H1 (cell line): ENCODE measurements at regions of chr3 and their contacts with region 1.

Region 1: DNA sequence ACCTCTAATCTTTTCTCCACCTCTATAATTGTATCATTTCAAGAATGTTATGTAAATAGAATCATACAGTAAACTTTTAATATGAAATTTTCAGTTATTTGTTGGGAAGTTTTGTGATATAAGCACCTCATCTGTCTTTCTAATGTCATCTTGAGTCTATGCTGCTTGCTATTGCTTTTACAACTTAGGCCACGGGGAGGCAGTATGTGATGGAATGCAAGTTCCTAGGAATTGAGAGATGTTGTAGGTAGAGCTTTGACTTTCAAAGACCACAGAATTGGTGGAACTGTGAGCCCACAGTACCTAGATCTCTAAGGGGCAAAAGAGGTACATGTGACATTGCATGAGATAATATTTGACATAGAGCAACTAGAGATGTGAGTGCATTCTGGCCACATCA is 328.3 kb downstream of the MFSD1 start:
- DNase-seq: peak; percentile 5 to 69
- H3K4me3 ChIP-seq: no peak overlapping the region
- H3K27ac ChIP-seq: no peak overlapping the region
- H3K4me1 ChIP-seq: no peaks in the 10 kb centered on the region
- H3K27me3 ChIP-seq: no peaks in the 10 kb centered on the region
- CTCF ChIP-seq: peak in 2 of 3 experiments; percentile 66 to 78; a peak in 3 of 4 replicates
- EP300 ChIP-seq: no peak
- POLR2A ChIP-seq: no peak
- RAD21 ChIP-seq: peak; percentile 67 to 75

Region 2: DNA sequence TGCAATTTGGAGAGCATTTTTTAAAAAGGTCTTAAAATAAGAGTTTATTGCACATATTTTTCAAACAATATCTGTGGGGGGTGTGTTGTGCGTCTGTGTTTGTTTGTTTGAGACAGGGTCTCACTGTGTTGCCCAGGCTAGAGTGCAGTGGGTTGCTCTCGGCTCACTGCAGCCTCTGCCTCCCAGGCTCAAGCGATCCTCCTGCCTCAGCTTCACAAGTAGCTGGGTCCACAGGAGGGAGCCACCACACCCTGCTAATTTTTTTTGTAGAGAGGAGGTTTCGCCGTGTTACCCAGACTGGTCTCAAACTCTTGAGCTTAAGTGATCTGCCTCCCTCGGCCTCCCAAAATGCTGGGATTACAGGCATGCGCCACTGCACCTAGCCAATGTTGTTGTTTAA is 556.4 kb before region 1 on chr3:
- CTCF ChIA-PET with region 1: no interaction called
- POLR2A ChIA-PET with region 1: no interaction called
- DNase-seq: no peak
- H3K4me3 ChIP-seq: no peak overlapping the region
- H3K27ac ChIP-seq: no peak overlapping the region
- H3K4me1 ChIP-seq: peaks cover 0 to 15% (median 3%) of the 10 kb centered on the region in 4 experiments; a peak in 2 of 7 replicates
- H3K27me3 ChIP-seq: peaks cover 0 to 13% (median 10%) of the 10 kb centered on the region in 4 experiments; a peak in 5 of 7 replicates
- CTCF ChIP-seq: peak in 2 of 3 experiments; percentile 11 to 29; a peak in 2 of 4 replicates
- EP300 ChIP-seq: no peak
- POLR2A ChIP-seq: no peak
- RAD21 ChIP-seq: peak; percentile 36 to 42; a peak in 3 of 4 replicates

Region 3: GRCh38 chr3:158912188-158912587 is 217.9 kb before region 1 on chr3:
- CTCF ChIA-PET with region 1: interaction called, 22 read pairs
- POLR2A ChIA-PET with region 1: no interaction called
- DNase-seq: no peak
- H3K4me3 ChIP-seq: no peak overlapping the region
- H3K27ac ChIP-seq: no peak overlapping the region
- H3K4me1 ChIP-seq: no peaks in the 10 kb centered on the region
- H3K27me3 ChIP-seq: no peaks in the 10 kb centered on the region
- CTCF ChIP-seq: peak in 2 of 3 experiments; percentile 45 to 55; a peak in 2 of 4 replicates
- EP300 ChIP-seq: no peak
- POLR2A ChIP-seq: no peak
- RAD21 ChIP-seq: peak; percentile 55 to 67

Region 4: GRCh38 chr3:159146856-159147435 is 16.8 kb after region 1 on chr3:
- CTCF ChIA-PET with region 1: interaction called, 17 read pairs
- POLR2A ChIA-PET with region 1: no interaction called
- DNase-seq: no peak
- H3K4me3 ChIP-seq: no peak overlapping the region
- H3K27ac ChIP-seq: no peak overlapping the region
- H3K4me1 ChIP-seq: no peaks in the 10 kb centered on the region
- H3K27me3 ChIP-seq: no peaks in the 10 kb centered on the region; a peak in 1 of 7 replicates
- CTCF ChIP-seq: no peak
- EP300 ChIP-seq: no peak
- POLR2A ChIP-seq: no peak
- RAD21 ChIP-seq: no peak

Region 5: GRCh38 chr3:159245871-159246270 is 115.8 kb after region 1 on chr3:
- CTCF ChIA-PET with region 1: interaction called, 53 read pairs
- POLR2A ChIA-PET with region 1: no interaction called
- DNase-seq: no peak
- H3K4me3 ChIP-seq: no peak overlapping the region
- H3K27ac ChIP-seq: no peak overlapping the region
- H3K4me1 ChIP-seq: no peaks in the 10 kb centered on the region
- H3K27me3 ChIP-seq: no peaks in the 10 kb centered on the region
- CTCF ChIP-seq: no peak
- EP300 ChIP-seq: no peak
- POLR2A ChIP-seq: no peak
- RAD21 ChIP-seq: no peak

Region 6: DNA sequence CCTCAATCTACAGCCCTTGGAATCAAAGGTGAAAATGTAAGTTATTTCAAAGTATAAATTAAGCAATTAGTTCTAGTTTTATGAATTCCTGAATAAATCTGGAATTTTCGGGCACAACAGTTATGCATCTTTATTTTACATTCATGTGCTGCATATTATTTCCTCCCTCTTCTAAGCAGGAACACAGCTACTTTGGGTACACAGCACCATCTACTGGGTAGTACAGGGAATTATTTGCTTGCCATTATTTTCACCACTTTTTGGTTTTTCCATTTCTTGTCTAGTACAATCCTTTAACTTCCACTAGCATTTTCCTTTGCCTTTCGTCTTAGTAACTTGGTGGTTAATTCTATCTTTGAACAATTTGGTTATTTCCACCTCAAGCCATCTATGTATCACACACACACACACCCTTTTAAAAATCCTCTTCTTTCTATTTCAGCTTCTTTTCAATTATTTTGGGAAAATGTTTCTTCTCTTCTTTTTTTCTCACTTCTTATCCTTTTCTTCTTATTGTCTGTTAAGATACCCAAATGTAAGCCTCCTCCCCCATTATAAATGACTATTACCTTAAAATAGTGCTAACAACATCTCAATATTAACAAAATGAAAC is 122.8 kb after region 1 on chr3:
- CTCF ChIA-PET with region 1: interaction called, 53 read pairs
- POLR2A ChIA-PET with region 1: no interaction called
- DNase-seq: no peak
- H3K4me3 ChIP-seq: no peak overlapping the region
- H3K27ac ChIP-seq: no peak overlapping the region
- H3K4me1 ChIP-seq: no peaks in the 10 kb centered on the region
- H3K27me3 ChIP-seq: no peaks in the 10 kb centered on the region
- CTCF ChIP-seq: peak in 2 of 3 experiments; percentile 73 to 74; a peak in 3 of 4 replicates
- EP300 ChIP-seq: no peak
- POLR2A ChIP-seq: no peak
- RAD21 ChIP-seq: peak; percentile 94